Astrocyte of the cerebellum (primary cell): ENCODE measurements at regions of chr15 and their contacts with region 1.

Region 1: GRCh38 chr15:63402498-63403253 is 21.0 kb upstream of the CA12 start:
- DNase-seq: no peak
- H3K4me3 ChIP-seq: no peak overlapping the region
- CTCF ChIP-seq: peak; percentile 49

Region 2: GRCh38 chr15:63107895-63108546 is 294.7 kb before region 1 on chr15:
- in situ Hi-C with region 1: no loop called
- DNase-seq: peak; percentile 100
- H3K4me3 ChIP-seq: no peak overlapping the region
- CTCF ChIP-seq: no peak

Region 3: GRCh38 chr15:63234451-63234870 is 168.2 kb before region 1 on chr15:
- in situ Hi-C with region 1: no loop called
- DNase-seq: no peak
- H3K4me3 ChIP-seq: no peak overlapping the region
- CTCF ChIP-seq: no peak

Region 4: GRCh38 chr15:63306492-63307073 is 96.1 kb before region 1 on chr15:
- in situ Hi-C with region 1: loop called (anchors 5 kb)
- DNase-seq: no peak
- H3K4me3 ChIP-seq: no peak overlapping the region
- CTCF ChIP-seq: no peak

Region 5: GRCh38 chr15:63466378-63467192 is 63.9 kb after region 1 on chr15:
- in situ Hi-C with region 1: no loop called
- DNase-seq: no peak
- H3K4me3 ChIP-seq: no peak overlapping the region
- CTCF ChIP-seq: peak; percentile 62

Region 6: GRCh38 chr15:63573533-63573932 is 170.9 kb after region 1 on chr15:
- in situ Hi-C with region 1: no loop called
- DNase-seq: no peak
- H3K4me3 ChIP-seq: no peak overlapping the region
- CTCF ChIP-seq: no peak